Dendritic cell treated with granulocyte-macrophage colony-stimulating factor and Interleukin-4, amounts not matched to agents 40 ng/mL and 50 ng/mL, for 4 days (primary cell): ENCODE measurements at regions of chr15 and their contacts with region 1.

Region 1: DNA sequence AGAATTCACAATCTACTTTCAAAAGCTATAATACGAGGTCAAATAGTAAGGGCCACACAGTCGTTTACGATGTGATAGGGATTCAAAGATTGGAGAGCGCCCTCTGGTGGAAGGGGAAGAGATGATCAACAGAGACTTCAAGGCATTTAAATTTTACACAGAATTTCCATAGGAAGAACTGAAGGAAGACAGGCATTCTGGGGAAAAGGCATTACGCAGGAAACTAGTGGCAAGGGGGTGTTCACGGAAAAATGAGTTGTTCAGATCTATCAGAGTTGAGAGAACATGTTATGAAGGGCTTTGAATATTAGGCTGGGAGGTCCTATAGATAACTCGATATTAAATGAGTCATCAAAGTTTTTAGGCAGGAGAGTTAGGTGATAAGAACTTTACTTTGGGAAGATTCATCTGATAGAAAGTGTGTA is 128.7 kb downstream of the FRMD5 start:
- H3K4me3 Mint-ChIP-seq: no peak overlapping the region
- H3K27ac Mint-ChIP-seq: no peak overlapping the region
- H3K4me1 Mint-ChIP-seq: peaks cover 5% of the 10 kb centered on the region
- H3K27me3 Mint-ChIP-seq: peaks cover 5% of the 10 kb centered on the region

Region 2: DNA sequence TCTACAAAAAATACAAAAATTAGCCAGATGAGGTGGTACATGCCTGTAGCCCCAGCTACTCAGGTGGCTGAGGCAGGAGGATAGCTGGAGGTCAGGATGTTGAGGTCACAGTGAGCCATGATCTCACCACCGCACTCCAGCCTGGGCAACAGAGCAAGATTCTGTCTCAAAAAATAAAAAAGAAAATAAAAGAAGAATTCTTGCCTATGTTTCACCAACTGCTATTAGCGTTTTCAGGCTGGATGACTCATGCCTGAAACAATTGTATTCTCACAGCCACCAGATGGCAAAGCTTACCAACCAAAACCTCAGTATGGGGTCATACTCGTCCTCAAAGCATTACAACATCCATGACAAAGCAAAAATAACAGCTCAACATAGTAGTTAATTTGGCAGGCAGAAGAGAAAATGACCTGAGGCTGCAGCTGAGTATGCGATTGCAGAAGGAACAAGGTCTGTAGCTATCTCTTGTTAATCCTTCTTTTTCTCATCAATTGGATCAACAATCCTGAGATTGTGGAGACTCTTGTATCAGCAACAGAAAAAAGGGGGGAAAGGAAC is 625.5 kb before region 1 on chr15:
- intact Hi-C with region 1: loop called (anchors 10 kb)
- H3K4me3 Mint-ChIP-seq: no peak overlapping the region
- H3K27ac Mint-ChIP-seq: no peak overlapping the region
- H3K4me1 Mint-ChIP-seq: peaks cover 6% of the 10 kb centered on the region
- H3K27me3 Mint-ChIP-seq: no peaks in the 10 kb centered on the region

Region 3: DNA sequence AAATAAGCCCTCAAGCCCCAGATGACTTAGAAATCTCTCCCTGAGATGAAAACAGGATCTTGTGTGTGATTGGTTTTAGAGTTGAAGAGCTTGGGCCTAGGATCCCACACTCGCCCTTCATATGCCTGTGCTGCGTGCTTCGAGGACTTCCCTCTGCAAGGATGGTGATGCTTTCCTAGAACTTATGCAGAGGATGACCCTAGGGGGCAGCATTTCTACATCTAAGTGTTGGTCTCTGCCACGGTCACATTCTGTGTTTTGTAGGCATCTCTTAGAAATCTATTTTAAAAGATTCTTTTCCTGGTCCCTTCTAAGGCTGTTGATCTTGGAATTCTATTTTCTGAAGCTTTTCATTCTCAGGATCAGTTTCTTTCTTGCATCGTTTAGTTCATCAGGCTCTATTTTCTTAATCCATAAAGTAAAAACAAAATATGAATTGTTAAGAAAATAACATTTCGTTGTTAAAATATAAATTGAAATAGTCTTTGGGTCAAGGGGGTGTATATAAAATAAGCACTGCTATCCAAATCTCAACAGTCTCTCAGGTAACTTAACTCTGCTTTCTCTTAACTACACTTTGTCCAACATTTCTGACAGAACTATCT is 193.8 kb before region 1 on chr15:
- intact Hi-C with region 1: loop called (anchors 5 kb)
- H3K4me3 Mint-ChIP-seq: no peak overlapping the region
- H3K27ac Mint-ChIP-seq: no peak overlapping the region
- H3K4me1 Mint-ChIP-seq: no peaks in the 10 kb centered on the region
- H3K27me3 Mint-ChIP-seq: no peaks in the 10 kb centered on the region

Region 4: DNA sequence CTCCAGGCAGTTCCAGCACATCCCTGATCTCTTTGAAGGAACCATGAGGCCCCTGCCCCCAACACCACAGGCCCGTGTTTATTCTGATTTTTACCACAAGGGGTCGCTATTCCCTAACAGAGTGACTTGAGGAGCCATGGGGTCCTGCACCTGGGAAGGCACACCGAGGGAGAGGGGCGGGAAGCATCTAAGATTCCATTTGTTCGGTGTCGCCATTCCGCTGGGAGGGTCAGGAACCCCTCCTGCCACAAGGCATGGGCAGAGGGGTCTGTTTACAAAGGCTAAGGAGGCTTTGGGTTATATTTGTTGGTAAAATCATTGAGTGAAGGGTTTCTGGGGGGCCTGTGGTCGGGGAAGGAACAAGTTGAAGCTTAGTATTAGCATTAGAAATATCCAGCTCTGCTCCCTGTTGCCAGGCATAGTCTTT is 162.5 kb before region 1 on chr15:
- intact Hi-C with region 1: loop called (anchors 5 kb)
- H3K4me3 Mint-ChIP-seq: no peak overlapping the region
- H3K27ac Mint-ChIP-seq: no peak overlapping the region
- H3K4me1 Mint-ChIP-seq: peaks cover 5% of the 10 kb centered on the region
- H3K27me3 Mint-ChIP-seq: peaks cover 2% of the 10 kb centered on the region